Heart right ventricle (tissue), 16 donors: ENCODE measurements at regions of chr15 and their contacts with region 1.

Region 1: DNA sequence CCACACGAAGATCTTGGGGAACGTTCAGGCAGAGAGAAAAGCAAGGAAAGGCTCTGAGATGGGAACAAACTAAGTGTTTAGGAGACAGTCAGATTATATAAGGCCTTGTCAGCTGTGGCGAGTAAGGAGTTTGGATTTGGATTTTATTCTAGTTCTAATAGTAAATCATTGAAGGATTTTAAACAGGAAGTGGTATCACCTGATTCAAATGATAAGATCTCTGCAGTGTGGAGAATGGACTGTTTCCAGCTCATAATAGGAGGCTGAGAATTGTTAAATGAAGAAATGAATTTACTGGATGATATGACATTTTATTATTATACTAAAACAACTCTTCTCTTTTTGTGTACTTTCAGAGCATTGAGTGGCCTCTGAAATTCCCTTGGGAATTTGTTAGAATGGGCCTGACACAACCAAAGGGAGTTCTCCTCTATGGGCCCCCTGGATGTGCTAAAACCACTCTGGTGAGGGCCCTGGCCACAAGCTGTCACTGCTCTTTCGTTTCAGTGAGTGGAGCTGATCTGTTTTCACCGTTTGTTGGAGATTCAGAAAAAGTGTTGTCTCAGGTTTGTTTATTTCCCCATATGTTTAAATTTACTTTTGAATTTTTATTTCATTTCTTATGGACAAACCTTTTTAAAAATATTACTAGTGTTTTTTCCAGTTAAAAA is 36.0 kb upstream of the GATM start:
- DNase-seq: no peak
- ATAC-seq: no peak
- H3K4me3 ChIP-seq: no peak overlapping the region
- H3K27ac ChIP-seq: no peak overlapping the region
- H3K4me1 ChIP-seq: peaks cover 0 to 7% (median 0%) of the 10 kb centered on the region in 9 donors
- H3K27me3 ChIP-seq: no peaks in the 10 kb centered on the region
- CTCF ChIP-seq: no peak

Region 2: DNA sequence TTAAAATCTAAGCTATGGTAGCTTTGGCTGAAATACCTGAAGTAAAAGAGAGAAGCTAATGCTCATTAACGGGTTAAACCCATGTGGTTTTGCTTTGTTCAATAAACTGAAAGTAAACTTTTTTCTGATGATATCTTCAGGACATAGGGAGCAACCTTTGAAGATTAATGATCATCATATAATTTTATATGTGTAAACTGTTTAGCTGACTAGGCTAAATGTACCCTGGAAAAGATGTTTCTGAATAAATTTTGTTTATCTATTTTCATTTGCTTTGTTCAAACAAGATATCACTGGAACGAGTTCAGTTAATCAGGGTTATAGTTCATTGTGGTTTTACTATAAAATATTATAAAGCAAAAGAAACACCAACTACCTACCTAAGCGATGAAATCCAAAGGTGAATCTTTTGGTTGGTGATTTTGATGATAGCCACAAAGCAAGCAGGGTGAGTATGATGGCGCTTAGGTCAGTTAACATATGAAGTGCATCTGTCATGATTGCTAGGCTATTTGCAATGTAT is 96.5 kb after region 1 on chr15:
- intact Hi-C with region 1: loop called in 1 of 10 experiments (anchors 10 kb)
- DNase-seq: no peak
- ATAC-seq: no peak
- H3K4me3 ChIP-seq: no peak overlapping the region
- H3K27ac ChIP-seq: no peak overlapping the region
- H3K4me1 ChIP-seq: no peaks in the 10 kb centered on the region
- H3K27me3 ChIP-seq: no peaks in the 10 kb centered on the region
- CTCF ChIP-seq: no peak